A673 (cell line): ENCODE measurements at regions of chr7 and their contacts with region 1.

Region 1: DNA sequence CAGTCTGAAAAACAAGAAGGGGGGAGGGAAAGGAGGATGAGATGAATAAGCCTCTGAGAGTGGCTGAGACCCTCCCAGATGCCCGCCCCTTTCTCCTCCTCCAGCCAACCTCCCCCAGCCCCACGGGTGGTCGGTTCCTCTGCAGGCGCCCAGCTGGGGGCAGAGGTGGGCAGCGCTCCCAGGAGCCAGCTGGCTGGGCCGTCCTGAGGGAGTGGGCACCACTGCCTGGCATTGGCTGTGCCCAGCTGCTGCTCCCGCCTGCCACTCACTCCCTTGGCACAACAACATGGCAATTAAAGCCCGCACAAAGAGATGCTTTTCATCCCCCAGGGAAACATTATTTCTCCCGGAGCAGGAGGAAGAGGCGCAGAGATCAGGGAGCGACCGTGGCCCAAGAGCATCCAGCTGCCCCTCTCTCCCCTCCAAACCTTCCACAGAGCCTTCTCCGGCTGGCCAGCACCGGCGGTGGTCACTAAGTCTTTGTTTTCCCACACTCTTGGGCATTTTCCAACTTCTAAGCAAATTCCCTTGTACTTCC is 107.2 kb downstream of the SPDYE5 start:
- DNase-seq: peak; percentile 78
- H3K4me3 ChIP-seq: no peak overlapping the region
- H3K27ac ChIP-seq: peak overlapping the region; percentile 55
- H3K4me1 ChIP-seq: peaks cover 34% of the 10 kb centered on the region
- H3K27me3 ChIP-seq: no peaks in the 10 kb centered on the region
- CTCF ChIP-seq: no peak

Region 2: GRCh38 chr7:75546237-75547015 is 52.9 kb before region 1 on chr7:
- CTCF ChIA-PET with region 1: interaction called, 5 read pairs
- POLR2A ChIA-PET with region 1: no interaction called
- intact Hi-C with region 1: loop called (anchors 10 kb)
- DNase-seq: no peak
- H3K4me3 ChIP-seq: no peak overlapping the region
- H3K27ac ChIP-seq: no peak overlapping the region
- H3K4me1 ChIP-seq: no peaks in the 10 kb centered on the region
- H3K27me3 ChIP-seq: no peaks in the 10 kb centered on the region
- CTCF ChIP-seq: no peak

Region 3: GRCh38 chr7:75704928-75705327 is 105.6 kb after region 1 on chr7:
- CTCF ChIA-PET with region 1: no interaction called
- POLR2A ChIA-PET with region 1: no interaction called
- intact Hi-C with region 1: no loop called
- DNase-seq: no peak
- H3K4me3 ChIP-seq: no peak overlapping the region
- H3K27ac ChIP-seq: no peak overlapping the region
- H3K4me1 ChIP-seq: no peaks in the 10 kb centered on the region
- H3K27me3 ChIP-seq: no peaks in the 10 kb centered on the region
- CTCF ChIP-seq: no peak